Heart left ventricle (tissue), 16 donors: ENCODE measurements at regions of chr1 and their contacts with region 1.

Region 1: DNA sequence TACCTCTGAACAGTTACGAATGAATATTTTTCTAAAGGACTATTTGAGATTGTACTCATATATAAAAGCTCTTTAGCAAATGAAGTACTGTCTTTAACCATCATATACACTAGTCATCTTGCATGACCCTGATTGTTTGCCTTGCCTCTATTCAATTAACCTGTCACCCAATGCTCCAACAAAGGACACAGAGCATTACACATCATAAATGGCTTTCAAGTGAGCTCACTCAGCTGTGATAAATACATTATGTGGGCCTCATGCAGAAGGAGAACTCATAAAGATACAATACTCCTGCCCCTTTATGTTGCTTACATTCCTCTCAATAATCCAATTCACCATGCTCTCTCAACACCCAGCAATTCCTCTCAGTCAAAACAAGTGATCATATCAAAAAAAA is 993.0 kb upstream of the PRMT6 start:
- DNase-seq: no peak
- ATAC-seq: no peak
- H3K4me3 ChIP-seq: no peak overlapping the region
- H3K27ac ChIP-seq: no peak overlapping the region
- H3K4me1 ChIP-seq: no peaks in the 10 kb centered on the region
- H3K27me3 ChIP-seq: no peaks in the 10 kb centered on the region
- CTCF ChIP-seq: no peak
- POLR2A ChIP-seq: no peak

Region 2: DNA sequence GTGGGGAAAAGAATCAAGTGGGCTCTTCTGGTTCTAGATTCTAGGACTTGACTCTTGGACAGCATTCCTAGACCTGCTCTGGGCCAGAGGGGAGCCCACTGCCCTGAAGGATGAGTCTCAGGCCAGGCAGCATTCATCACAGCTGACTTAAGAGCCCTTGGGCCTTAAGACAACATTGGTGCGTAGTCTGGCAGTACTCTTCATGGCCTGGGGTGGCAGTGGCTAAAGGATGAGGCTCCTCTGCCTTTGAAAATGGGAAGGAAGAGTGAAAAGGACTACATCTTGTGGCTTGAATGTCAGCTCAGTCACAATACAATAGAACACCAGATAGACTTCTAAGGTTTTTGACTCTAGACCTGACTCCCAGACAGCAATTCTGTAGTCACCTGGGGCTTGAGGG is 422.1 kb before region 1 on chr1:
- intact Hi-C with region 1: no loop called
- DNase-seq: no peak
- ATAC-seq: no peak
- H3K4me3 ChIP-seq: no peak overlapping the region
- H3K27ac ChIP-seq: no peak overlapping the region
- H3K4me1 ChIP-seq: no peaks in the 10 kb centered on the region
- H3K27me3 ChIP-seq: no peaks in the 10 kb centered on the region
- CTCF ChIP-seq: no peak
- POLR2A ChIP-seq: no peak

Region 3: DNA sequence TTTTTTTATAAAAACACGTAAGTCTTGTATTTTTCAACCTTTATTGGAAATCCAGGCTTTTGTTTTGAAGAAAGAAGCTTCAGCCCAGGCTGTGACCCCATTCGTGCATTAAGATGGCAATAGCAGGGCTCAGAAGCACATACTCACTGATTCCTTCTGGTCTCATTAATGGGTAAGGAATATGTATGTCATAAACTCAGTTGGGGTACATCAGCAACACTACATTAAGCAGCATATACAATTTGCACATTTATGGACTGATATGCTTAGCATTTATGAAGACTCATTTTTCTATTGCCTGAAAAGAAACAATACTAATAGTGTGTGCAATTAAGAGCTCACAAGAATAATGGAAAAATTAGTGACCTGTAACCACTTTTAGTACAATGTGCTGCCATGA is 47.5 kb after region 1 on chr1:
- intact Hi-C with region 1: no loop called
- DNase-seq: no peak
- ATAC-seq: no peak
- H3K4me3 ChIP-seq: no peak overlapping the region
- H3K27ac ChIP-seq: no peak overlapping the region
- H3K4me1 ChIP-seq: no peaks in the 10 kb centered on the region
- H3K27me3 ChIP-seq: no peaks in the 10 kb centered on the region
- CTCF ChIP-seq: no peak
- POLR2A ChIP-seq: no peak

Region 4: DNA sequence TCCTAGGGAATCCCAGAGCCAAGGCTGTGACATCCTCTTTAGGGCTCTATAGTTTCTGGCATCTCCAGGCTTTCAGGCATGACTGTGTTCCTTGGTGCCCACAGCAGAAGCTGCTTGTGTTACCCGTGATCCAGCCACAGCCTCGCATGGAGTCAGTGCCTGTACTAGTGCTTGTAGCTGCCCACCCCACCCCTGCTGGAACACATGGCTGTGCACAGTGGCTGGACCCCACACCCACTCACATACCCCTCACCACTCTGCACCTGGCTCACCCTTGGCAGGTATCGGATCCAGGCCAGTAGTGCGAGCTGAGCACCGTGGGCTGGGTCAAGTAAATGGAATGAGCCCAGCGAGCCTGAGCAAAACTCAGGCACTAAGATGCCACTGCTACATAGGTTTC is 58.2 kb after region 1 on chr1:
- intact Hi-C with region 1: loop called in 1 of 10 experiments (anchors 10 kb)
- DNase-seq: no peak
- ATAC-seq: no peak
- H3K4me3 ChIP-seq: no peak overlapping the region
- H3K27ac ChIP-seq: no peak overlapping the region
- H3K4me1 ChIP-seq: no peaks in the 10 kb centered on the region
- H3K27me3 ChIP-seq: no peaks in the 10 kb centered on the region
- CTCF ChIP-seq: no peak
- POLR2A ChIP-seq: no peak

Region 5: DNA sequence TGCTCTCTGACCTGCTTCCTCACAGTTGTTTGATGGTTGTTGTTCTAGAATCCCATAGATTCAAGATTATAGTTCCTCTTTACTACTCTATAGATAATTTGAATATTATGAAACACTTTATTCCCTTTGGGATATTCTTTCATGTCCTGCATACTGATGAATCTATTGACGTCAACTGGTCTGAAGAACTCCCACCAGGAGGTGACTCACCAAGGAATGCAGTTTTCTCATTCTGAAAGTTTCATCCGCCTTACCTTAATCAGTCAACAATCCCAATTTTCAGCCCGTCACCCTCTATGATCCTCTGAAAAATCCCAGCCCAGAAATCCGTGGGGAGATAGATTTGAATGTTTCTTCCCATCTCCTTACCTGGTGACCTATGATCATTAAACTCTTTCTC is 158.9 kb after region 1 on chr1:
- intact Hi-C with region 1: no loop called
- DNase-seq: no peak
- ATAC-seq: no peak
- H3K4me3 ChIP-seq: no peak overlapping the region
- H3K27ac ChIP-seq: no peak overlapping the region
- H3K4me1 ChIP-seq: no peaks in the 10 kb centered on the region
- H3K27me3 ChIP-seq: no peaks in the 10 kb centered on the region
- CTCF ChIP-seq: no peak
- POLR2A ChIP-seq: no peak